Naive thymus-derived CD4-positive, alpha-beta T cell (primary cell): ENCODE measurements at regions of chr4 and their contacts with region 1.

Region 1: DNA sequence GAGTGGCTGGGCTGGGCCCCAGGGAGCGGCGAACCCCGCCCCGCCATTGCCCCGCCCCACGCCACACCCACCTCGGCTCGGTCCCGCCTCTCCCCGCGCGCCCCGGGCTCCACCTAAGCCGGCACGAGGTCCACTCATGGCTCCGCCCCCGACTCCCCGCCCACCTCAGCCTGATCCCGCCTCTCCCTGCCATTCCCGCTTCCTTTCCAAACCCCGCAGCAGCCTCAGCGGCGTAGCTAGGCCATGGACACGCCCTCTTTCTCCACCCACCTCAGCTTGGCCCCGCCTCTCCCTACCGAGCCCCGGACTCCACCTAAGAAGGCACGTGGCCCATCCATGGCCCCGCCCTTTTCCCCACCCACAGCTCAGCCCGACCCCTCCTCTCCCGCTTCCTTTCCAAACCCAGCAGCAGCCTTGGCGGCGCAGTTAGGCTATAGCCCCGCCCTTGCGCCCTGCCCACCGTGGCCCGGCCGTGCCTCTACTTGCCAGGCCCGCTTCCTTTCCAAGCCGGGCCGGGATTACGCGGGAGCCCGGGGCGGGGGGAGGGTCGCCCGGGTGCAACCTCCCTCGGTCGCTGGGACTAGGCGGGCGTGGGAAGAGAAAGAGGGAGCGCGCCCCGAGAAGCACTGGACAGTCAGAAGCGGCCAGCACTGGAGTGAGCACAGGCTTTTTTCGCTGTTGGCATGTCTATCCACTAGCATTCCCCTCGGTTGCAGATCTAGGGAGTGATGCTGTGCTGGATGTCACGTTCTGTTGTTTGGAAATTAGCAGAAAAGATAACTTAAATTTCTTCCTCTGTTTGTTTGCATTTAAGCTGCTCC is at the start of gene RELL1:
- DNase-seq: peak; percentile 96 to 99 (median 99)
- ATAC-seq: peak; percentile 92
- H3K4me3 ChIP-seq: peak within 1 kb of the TSS; percentile 50
- H3K4me3 Mint-ChIP-seq: peak within 1 kb of the TSS; percentile 92 to 98 (median 96)
- H3K27ac ChIP-seq: peak within 1 kb of the TSS; percentile 92
- H3K27ac Mint-ChIP-seq: peak within 1 kb of the TSS; percentile 88 to 99 (median 95)
- H3K4me1 ChIP-seq: peaks cover 22 to 30% of the 10 kb centered on the region in 2 donors
- H3K4me1 Mint-ChIP-seq: peaks cover 34 to 41% (median 39%) of the 10 kb centered on the region in 7 donors
- H3K27me3 ChIP-seq: no peaks in the 10 kb centered on the region
- H3K27me3 Mint-ChIP-seq: peaks cover 0 to 11% (median 0%) of the 10 kb centered on the region in 5 donors
- total RNA-seq, gene RELL1: 25.5 to 35.2 (median 28.2) TPM

Region 2: GRCh38 chr4:37603070-37603468 is 83.5 kb before region 1 on chr4:
- CTCF ChIA-PET with region 1: interaction called, 3 read pairs
- POLR2A ChIA-PET with region 1: no interaction called
- intact Hi-C with region 1: loop called (anchors 1 kb)
- DNase-seq: peak; percentile 38 to 84 (median 64)
- ATAC-seq: peak; percentile 87
- H3K4me3 ChIP-seq: no peak overlapping the region
- H3K4me3 Mint-ChIP-seq: peak overlapping the region in 2 of 10 donors; percentile 3 to 58
- H3K27ac ChIP-seq: no peak overlapping the region
- H3K27ac Mint-ChIP-seq: peak overlapping the region in 5 of 9 donors; percentile 2 to 70 (median 55)
- H3K4me1 ChIP-seq: peaks cover 0 to 3% of the 10 kb centered on the region in 2 donors
- H3K4me1 Mint-ChIP-seq: peaks cover 6 to 33% (median 11%) of the 10 kb centered on the region in 7 donors
- H3K27me3 ChIP-seq: no peaks in the 10 kb centered on the region
- H3K27me3 Mint-ChIP-seq: no peaks in the 10 kb centered on the region

Region 3: DNA sequence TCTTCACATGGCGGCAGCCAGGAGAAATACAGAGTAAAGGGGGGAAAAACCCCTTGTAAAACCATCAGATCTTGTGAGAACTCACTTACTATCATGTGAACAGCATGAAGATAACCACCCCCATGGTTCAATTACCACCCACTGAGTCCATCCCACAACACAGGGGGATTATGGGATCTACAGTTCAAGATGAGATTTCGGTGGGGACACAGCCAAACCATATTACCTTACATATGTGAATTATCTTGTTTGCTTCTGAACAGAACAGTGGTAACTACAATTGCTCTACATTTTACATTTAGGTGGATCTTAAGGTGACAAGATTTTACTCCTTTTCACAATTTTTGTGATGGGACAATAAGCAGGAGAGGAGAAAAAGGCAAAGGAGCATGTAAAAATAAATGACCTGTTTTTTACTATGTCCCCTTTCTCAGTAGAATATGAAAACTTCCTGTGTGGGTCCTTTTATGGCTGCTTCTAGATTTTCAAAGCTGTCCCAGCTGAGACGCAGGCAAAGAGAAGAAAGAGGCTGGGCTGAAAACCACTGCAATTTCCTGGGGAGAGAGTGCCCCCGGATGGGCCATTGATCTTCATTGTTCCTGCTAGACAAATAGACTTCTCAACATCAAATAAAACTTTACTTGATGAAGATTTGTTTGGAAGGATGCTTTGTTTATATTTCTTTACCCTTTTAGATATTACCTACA is 94.0 kb after region 1 on chr4:
- CTCF ChIA-PET with region 1: interaction called, 3 read pairs
- POLR2A ChIA-PET with region 1: interaction called, 6 read pairs
- intact Hi-C with region 1: loop called (anchors 1 to 5 kb)
- DNase-seq: peak; percentile 20 to 90 (median 83)
- ATAC-seq: peak; percentile 96
- H3K4me3 ChIP-seq: peak overlapping the region; percentile 25
- H3K4me3 Mint-ChIP-seq: peak overlapping the region; percentile 19 to 84 (median 62)
- H3K27ac ChIP-seq: peak overlapping the region; percentile 59
- H3K27ac Mint-ChIP-seq: peak overlapping the region; percentile 32 to 96 (median 92)
- H3K4me1 ChIP-seq: peaks cover 12 to 27% of the 10 kb centered on the region in 2 donors
- H3K4me1 Mint-ChIP-seq: peaks cover 11 to 45% (median 28%) of the 10 kb centered on the region in 7 donors
- H3K27me3 ChIP-seq: no peaks in the 10 kb centered on the region
- H3K27me3 Mint-ChIP-seq: peaks cover 0 to 3% (median 0%) of the 10 kb centered on the region in 5 donors

Region 4: GRCh38 chr4:37977471-37978247 is 291.1 kb after region 1 on chr4:
- CTCF ChIA-PET with region 1: no interaction called
- POLR2A ChIA-PET with region 1: no interaction called
- intact Hi-C with region 1: loop called (anchors 1 kb)
- DNase-seq: peak; percentile 56 to 75 (median 70)
- ATAC-seq: peak; percentile 87
- H3K4me3 ChIP-seq: peak overlapping the region; percentile 69
- H3K4me3 Mint-ChIP-seq: peak overlapping the region; percentile 74 to 91 (median 84)
- H3K27ac ChIP-seq: peak overlapping the region; percentile 85
- H3K27ac Mint-ChIP-seq: peak overlapping the region; percentile 51 to 90 (median 78)
- H3K4me1 ChIP-seq: peaks cover 9 to 13% of the 10 kb centered on the region in 2 donors
- H3K4me1 Mint-ChIP-seq: peaks cover 14 to 40% (median 34%) of the 10 kb centered on the region in 7 donors
- H3K27me3 ChIP-seq: no peaks in the 10 kb centered on the region
- H3K27me3 Mint-ChIP-seq: no peaks in the 10 kb centered on the region

Region 5: GRCh38 chr4:38856524-38857337 is 1170.1 kb after region 1 on chr4 and contains the start of gene TLR6:
- CTCF ChIA-PET with region 1: no interaction called
- POLR2A ChIA-PET with region 1: no interaction called
- intact Hi-C with region 1: loop called in 1 of 2 experiments (anchors 10 kb)
- DNase-seq: peak in 8 of 9 donors; percentile 37 to 90 (median 83)
- ATAC-seq: peak; percentile 83
- H3K4me3 ChIP-seq: peak within 1 kb of the TSS; percentile 14
- H3K4me3 Mint-ChIP-seq: peak within 1 kb of the TSS in 9 of 10 donors; percentile 62 to 81 (median 67)
- H3K27ac ChIP-seq: peak within 1 kb of the TSS; percentile 49
- H3K27ac Mint-ChIP-seq: peak within 1 kb of the TSS; percentile 76 to 93 (median 90)
- H3K4me1 ChIP-seq: peaks cover 0 to 26% of the 10 kb centered on the region in 2 donors
- H3K4me1 Mint-ChIP-seq: peaks cover 28 to 52% (median 46%) of the 10 kb centered on the region in 7 donors
- H3K27me3 ChIP-seq: no peaks in the 10 kb centered on the region
- H3K27me3 Mint-ChIP-seq: peaks cover 0 to 6% (median 0%) of the 10 kb centered on the region in 5 donors
- total RNA-seq, gene TLR6: 1.00 to 8.8 (median 1.9) TPM

Region 6: GRCh38 chr4:39365830-39366771 is 1679.5 kb after region 1 on chr4 and contains the start of gene RFC1:
- CTCF ChIA-PET with region 1: no interaction called
- POLR2A ChIA-PET with region 1: no interaction called
- intact Hi-C with region 1: loop called in 1 of 2 experiments (anchors 5 kb)
- DNase-seq: peak; percentile 84 to 92 (median 91)
- ATAC-seq: peak; percentile 98
- H3K4me3 ChIP-seq: peak within 1 kb of the TSS; percentile 69
- H3K4me3 Mint-ChIP-seq: peak within 1 kb of the TSS; percentile 88 to 98 (median 94)
- H3K27ac ChIP-seq: peak within 1 kb of the TSS; percentile 84
- H3K27ac Mint-ChIP-seq: peak within 1 kb of the TSS; percentile 72 to 97 (median 92)
- H3K4me1 ChIP-seq: peaks cover 12 to 19% of the 10 kb centered on the region in 2 donors
- H3K4me1 Mint-ChIP-seq: peaks cover 33 to 59% (median 41%) of the 10 kb centered on the region in 7 donors
- H3K27me3 ChIP-seq: no peaks in the 10 kb centered on the region
- H3K27me3 Mint-ChIP-seq: no peaks in the 10 kb centered on the region
- total RNA-seq, gene RFC1: 62.4 to 66.4 (median 64.3) TPM